Endothelial cell of umbilical vein (primary cell): ENCODE measurements at regions of chr5 and their contacts with region 1.

Region 1: GRCh38 chr5:39547553-39548154 is 122.9 kb upstream of the DAB2 start:
- DNase-seq: peak; percentile 85
- H3K4me3 ChIP-seq: no peak overlapping the region
- H3K27ac ChIP-seq: peak overlapping the region; percentile 15
- H3K4me1 ChIP-seq: peaks cover 25% of the 10 kb centered on the region
- H3K27me3 ChIP-seq: no peaks in the 10 kb centered on the region
- CTCF ChIP-seq: peak; percentile 54 to 55
- POLR2A ChIP-seq: no peak

Region 2: GRCh38 chr5:39370555-39371366 is 176.9 kb before region 1 on chr5:
- CTCF ChIA-PET with region 1: interaction called, 156 read pairs
- POLR2A ChIA-PET with region 1: interaction called, 3 read pairs
- dilution Hi-C with region 1: no loop called
- intact Hi-C with region 1: no loop called
- DNase-seq: no peak
- H3K4me3 ChIP-seq: no peak overlapping the region
- H3K27ac ChIP-seq: no peak overlapping the region
- H3K4me1 ChIP-seq: no peaks in the 10 kb centered on the region
- H3K27me3 ChIP-seq: no peaks in the 10 kb centered on the region
- CTCF ChIP-seq: no peak
- POLR2A ChIP-seq: no peak

Region 3: GRCh38 chr5:39381376-39381775 is 166.3 kb before region 1 on chr5:
- CTCF ChIA-PET with region 1: interaction called, 156 read pairs
- POLR2A ChIA-PET with region 1: interaction called, 3 read pairs
- dilution Hi-C with region 1: no loop called
- intact Hi-C with region 1: loop called (anchors 1 kb)
- DNase-seq: no peak
- H3K4me3 ChIP-seq: no peak overlapping the region
- H3K27ac ChIP-seq: no peak overlapping the region
- H3K4me1 ChIP-seq: no peaks in the 10 kb centered on the region
- H3K27me3 ChIP-seq: no peaks in the 10 kb centered on the region
- CTCF ChIP-seq: no peak
- POLR2A ChIP-seq: no peak

Region 4: GRCh38 chr5:39411051-39411450 is 136.6 kb before region 1 on chr5:
- CTCF ChIA-PET with region 1: interaction called, 24 read pairs
- POLR2A ChIA-PET with region 1: no interaction called
- dilution Hi-C with region 1: loop called (anchors 25 kb)
- intact Hi-C with region 1: no loop called
- DNase-seq: peak; percentile 89
- H3K4me3 ChIP-seq: peak overlapping the region in 1 of 3 experiments; percentile 23
- H3K27ac ChIP-seq: peak overlapping the region; percentile 47
- H3K4me1 ChIP-seq: peaks cover 43% of the 10 kb centered on the region
- H3K27me3 ChIP-seq: no peaks in the 10 kb centered on the region
- CTCF ChIP-seq: no peak
- POLR2A ChIP-seq: no peak

Region 5: GRCh38 chr5:39475881-39476842 is 71.5 kb before region 1 on chr5:
- CTCF ChIA-PET with region 1: interaction called, 14 read pairs
- POLR2A ChIA-PET with region 1: interaction called, 3 read pairs
- dilution Hi-C with region 1: no loop called
- intact Hi-C with region 1: no loop called
- DNase-seq: peak; percentile 81
- H3K4me3 ChIP-seq: no peak overlapping the region
- H3K27ac ChIP-seq: no peak overlapping the region
- H3K4me1 ChIP-seq: peaks cover 9% of the 10 kb centered on the region
- H3K27me3 ChIP-seq: no peaks in the 10 kb centered on the region
- CTCF ChIP-seq: no peak
- POLR2A ChIP-seq: no peak

Region 6: DNA sequence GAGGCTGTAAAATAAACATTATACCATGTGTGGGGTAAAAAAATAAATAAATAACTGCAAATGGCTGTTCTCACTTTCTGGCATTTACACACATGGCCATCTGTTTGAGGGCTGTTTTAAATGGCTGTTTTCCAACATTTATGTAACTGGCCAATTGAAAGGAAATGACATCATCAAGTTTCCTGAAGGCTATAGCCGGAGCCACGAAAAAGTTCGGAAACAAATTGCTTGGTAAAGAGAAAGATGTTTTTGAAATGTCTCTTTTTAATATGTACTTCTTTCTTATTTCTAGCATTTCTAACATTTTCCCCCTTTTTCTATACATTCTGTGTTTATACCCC is 27.5 kb before region 1 on chr5:
- CTCF ChIA-PET with region 1: interaction called, 29 read pairs
- POLR2A ChIA-PET with region 1: interaction called, 17 read pairs
- dilution Hi-C with region 1: no loop called
- intact Hi-C with region 1: no loop called
- DNase-seq: peak; percentile 95
- H3K4me3 ChIP-seq: peak overlapping the region in 1 of 3 experiments; percentile 46
- H3K27ac ChIP-seq: peak overlapping the region; percentile 95
- H3K4me1 ChIP-seq: peaks cover 55% of the 10 kb centered on the region
- H3K27me3 ChIP-seq: no peaks in the 10 kb centered on the region
- CTCF ChIP-seq: no peak
- POLR2A ChIP-seq: peak; percentile 53

Region 7: GRCh38 chr5:39534666-39535065 is 13.0 kb before region 1 on chr5:
- CTCF ChIA-PET with region 1: interaction called, 14 read pairs
- POLR2A ChIA-PET with region 1: interaction called, 7 read pairs
- dilution Hi-C with region 1: no loop called
- intact Hi-C with region 1: no loop called
- DNase-seq: peak; percentile 72
- H3K4me3 ChIP-seq: no peak overlapping the region
- H3K27ac ChIP-seq: no peak overlapping the region
- H3K4me1 ChIP-seq: peaks cover 16% of the 10 kb centered on the region
- H3K27me3 ChIP-seq: no peaks in the 10 kb centered on the region
- CTCF ChIP-seq: no peak
- POLR2A ChIP-seq: no peak